ENCODE measurements at regions of chr7 and their contacts with region 1.

Region 1: GRCh38 chr7:111855161-111855856 is 293.0 kb upstream of the IMMP2L start:
- DNase-seq: peak; percentile 71
- H3K4me3 ChIP-seq: no peak overlapping the region
- H3K27ac ChIP-seq: no peak overlapping the region
- H3K4me1 ChIP-seq: peaks cover 3% of the 10 kb centered on the region
- H3K27me3 ChIP-seq: no peaks in the 10 kb centered on the region
- CTCF ChIP-seq: peak; percentile 63 to 66
- POLR2A ChIP-seq: no peak

Region 2: DNA sequence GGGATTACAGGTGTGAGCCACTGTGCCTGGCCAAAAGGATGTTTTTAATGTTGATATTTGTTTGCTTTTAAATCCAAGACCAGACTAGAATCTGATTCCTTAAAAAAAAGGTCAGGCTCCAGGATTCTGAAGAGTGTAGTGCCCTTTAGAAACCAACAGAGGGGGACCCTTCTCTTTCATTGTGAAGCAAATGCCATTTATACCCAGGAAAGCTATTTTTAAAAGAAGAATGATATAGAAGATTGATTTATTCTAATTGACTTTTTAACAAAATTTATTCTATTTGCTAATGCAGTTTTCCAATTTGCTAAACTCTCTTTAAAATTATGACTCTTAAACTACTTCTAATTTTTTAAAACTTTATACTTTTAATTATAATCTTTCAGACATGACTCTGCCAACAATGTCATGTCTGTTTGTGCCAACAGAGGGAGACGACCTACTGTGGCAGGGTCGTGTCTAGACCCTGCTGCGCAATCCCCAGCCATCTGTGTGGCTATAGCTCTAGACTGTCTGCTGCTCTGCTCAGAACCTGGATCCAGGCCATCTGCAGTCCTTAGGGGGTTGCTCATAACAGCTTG is 92.0 kb before region 1 on chr7:
- CTCF ChIA-PET with region 1: interaction called, 17 read pairs
- POLR2A ChIA-PET with region 1: no interaction called
- dilution Hi-C with region 1: no loop called
- intact Hi-C with region 1: loop called (anchors 1 kb)
- DNase-seq: peak; percentile 46
- H3K4me3 ChIP-seq: no peak overlapping the region
- H3K27ac ChIP-seq: no peak overlapping the region
- H3K4me1 ChIP-seq: no peaks in the 10 kb centered on the region
- H3K27me3 ChIP-seq: no peaks in the 10 kb centered on the region
- CTCF ChIP-seq: peak; percentile 15 to 39
- POLR2A ChIP-seq: no peak

Region 3: DNA sequence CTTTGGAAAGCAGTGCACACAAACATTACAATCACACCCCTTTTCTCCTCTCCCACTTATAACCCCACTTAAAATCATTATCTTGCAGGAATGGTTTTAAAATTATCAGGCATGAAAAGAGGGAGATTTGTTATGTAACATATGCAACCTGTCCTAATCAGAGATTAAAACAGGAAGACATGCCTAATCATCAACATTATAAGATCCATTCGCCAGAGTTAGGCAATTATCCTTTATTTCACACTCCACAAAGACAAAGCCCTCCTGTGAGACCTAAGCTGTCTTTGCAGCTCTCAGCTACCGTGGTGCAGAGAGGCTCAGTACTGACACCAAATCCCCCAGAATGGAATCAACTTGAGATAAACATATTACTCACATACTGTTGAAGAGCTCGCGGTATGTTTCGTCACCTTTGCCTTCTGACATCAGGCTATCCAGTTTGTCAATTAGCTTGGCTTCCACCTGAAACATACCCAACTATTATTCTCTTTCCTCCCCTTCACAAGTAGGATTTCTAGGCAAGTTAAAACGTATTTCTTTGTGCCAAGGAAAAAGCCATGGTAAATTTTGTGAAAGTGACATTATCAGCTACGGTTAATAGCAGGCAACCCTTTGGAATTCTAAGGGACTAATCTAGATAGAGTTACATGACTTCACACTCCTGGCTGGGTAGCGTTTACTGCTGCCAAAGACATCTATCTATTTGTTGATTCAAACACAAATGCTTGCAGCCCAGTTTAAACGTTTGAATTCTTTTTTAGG is 66.8 kb before region 1 on chr7:
- CTCF ChIA-PET with region 1: interaction called, 11 read pairs
- POLR2A ChIA-PET with region 1: no interaction called
- dilution Hi-C with region 1: no loop called
- intact Hi-C with region 1: no loop called
- DNase-seq: no peak
- H3K4me3 ChIP-seq: no peak overlapping the region
- H3K27ac ChIP-seq: no peak overlapping the region
- H3K4me1 ChIP-seq: no peaks in the 10 kb centered on the region
- H3K27me3 ChIP-seq: no peaks in the 10 kb centered on the region
- CTCF ChIP-seq: no peak
- POLR2A ChIP-seq: no peak

Region 4: DNA sequence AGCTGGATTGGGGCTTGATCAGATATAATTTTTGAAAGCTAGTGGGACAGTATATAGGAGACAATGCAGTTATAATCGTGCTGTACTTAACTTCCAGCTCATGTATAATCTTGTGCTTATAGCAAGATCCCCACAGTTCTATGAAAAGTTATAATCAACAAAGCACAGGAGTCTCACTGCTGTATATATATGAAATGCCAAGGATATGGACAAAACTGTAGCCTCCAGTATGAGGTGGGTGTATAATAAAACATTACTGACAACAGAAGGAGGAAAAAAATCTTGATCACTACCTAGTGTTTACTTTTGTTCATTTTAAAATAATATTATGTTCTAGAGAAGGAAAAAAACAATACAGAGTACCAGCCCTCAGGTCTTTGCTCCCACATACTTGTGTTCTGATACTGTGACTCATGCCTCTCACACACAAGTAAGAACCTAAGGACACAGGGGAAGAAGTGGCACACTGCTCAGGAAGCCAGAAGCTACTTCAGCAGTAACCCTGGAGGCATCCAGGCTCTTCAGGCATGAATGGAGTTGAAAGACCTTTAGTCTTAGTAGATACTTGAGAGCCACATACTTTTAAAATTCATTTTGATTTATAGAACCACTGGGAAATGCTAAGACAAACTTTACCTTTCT is 27.3 kb before region 1 on chr7:
- CTCF ChIA-PET with region 1: interaction called, 12 read pairs
- POLR2A ChIA-PET with region 1: no interaction called
- dilution Hi-C with region 1: no loop called
- intact Hi-C with region 1: no loop called
- DNase-seq: peak; percentile 73
- H3K4me3 ChIP-seq: no peak overlapping the region
- H3K27ac ChIP-seq: peak overlapping the region; percentile 54
- H3K4me1 ChIP-seq: peaks cover 43% of the 10 kb centered on the region
- H3K27me3 ChIP-seq: no peaks in the 10 kb centered on the region
- CTCF ChIP-seq: no peak
- POLR2A ChIP-seq: no peak

Region 5: GRCh38 chr7:111844904-111845671 is 10.2 kb before region 1 on chr7:
- CTCF ChIA-PET with region 1: interaction called, 22 read pairs
- POLR2A ChIA-PET with region 1: no interaction called
- dilution Hi-C with region 1: no loop called
- intact Hi-C with region 1: no loop called
- DNase-seq: no peak
- H3K4me3 ChIP-seq: no peak overlapping the region
- H3K27ac ChIP-seq: no peak overlapping the region
- H3K4me1 ChIP-seq: peaks cover 5% of the 10 kb centered on the region
- H3K27me3 ChIP-seq: no peaks in the 10 kb centered on the region
- CTCF ChIP-seq: no peak
- POLR2A ChIP-seq: no peak

Region 6: GRCh38 chr7:112414855-112415490 is 559.7 kb after region 1 on chr7:
- CTCF ChIA-PET with region 1: interaction called, 4 read pairs
- POLR2A ChIA-PET with region 1: no interaction called
- dilution Hi-C with region 1: no loop called
- intact Hi-C with region 1: loop called (anchors 5 kb)
- DNase-seq: peak; percentile 63
- H3K4me3 ChIP-seq: no peak overlapping the region
- H3K27ac ChIP-seq: no peak overlapping the region
- H3K4me1 ChIP-seq: no peaks in the 10 kb centered on the region
- H3K27me3 ChIP-seq: no peaks in the 10 kb centered on the region
- CTCF ChIP-seq: peak; percentile 54 to 64
- POLR2A ChIP-seq: no peak

Measured in endothelial cell of umbilical vein (primary cell).